ENCODE measurements at regions of chr4 and their contacts with region 1.

Region 1: GRCh38 chr4:142126890-142127497 is 490.6 kb downstream of the IL15 start:
- DNase-seq: peak; percentile 80
- ATAC-seq: peak; percentile 80
- H3K4me3 ChIP-seq: no peak overlapping the region
- H3K27ac ChIP-seq: no peak overlapping the region
- H3K4me1 ChIP-seq: peaks cover 5% of the 10 kb centered on the region
- H3K27me3 ChIP-seq: no peaks in the 10 kb centered on the region
- CTCF ChIP-seq: peak; percentile 85
- POLR2A ChIP-seq: no peak
- RAD21 ChIP-seq: peak; percentile 95

Region 2: DNA sequence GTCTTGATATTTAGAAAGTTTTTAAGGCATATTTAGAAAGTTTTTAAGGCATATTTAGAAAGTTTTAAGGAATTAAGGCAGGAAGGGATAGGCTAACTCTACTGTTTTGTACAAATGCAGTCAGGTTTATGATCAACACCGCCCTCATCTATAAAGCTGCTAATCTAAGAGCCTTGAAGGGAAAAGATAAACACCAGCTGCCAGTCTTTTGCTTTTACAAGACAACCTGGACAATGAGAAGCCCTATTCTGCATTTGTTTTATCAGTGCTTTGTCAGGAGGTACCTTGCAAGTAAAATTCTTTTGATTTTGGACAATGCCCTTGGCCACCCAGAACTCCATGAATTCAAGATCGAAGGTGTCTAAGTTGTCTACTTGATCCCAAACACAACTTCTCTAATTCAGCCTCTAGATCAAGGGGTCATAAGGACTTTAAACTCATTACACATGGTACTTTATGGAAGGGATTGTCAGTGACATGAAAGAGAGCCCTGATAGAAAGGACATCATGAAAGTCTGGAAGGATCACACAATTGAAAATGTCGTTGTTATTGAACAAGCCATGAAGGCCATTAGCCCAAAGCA is 450.8 kb before region 1 on chr4:
- CTCF ChIA-PET with region 1: no interaction called
- POLR2A ChIA-PET with region 1: no interaction called
- dilution Hi-C with region 1: no loop called
- in situ Hi-C with region 1: no loop called
- intact Hi-C with region 1: no loop called
- DNase-seq: no peak
- ATAC-seq: no peak
- H3K4me3 ChIP-seq: no peak overlapping the region
- H3K27ac ChIP-seq: no peak overlapping the region
- H3K4me1 ChIP-seq: peaks cover 2% of the 10 kb centered on the region; the same call in 1 of the 2 replicates
- H3K27me3 ChIP-seq: no peaks in the 10 kb centered on the region
- CTCF ChIP-seq: no peak
- POLR2A ChIP-seq: no peak
- RAD21 ChIP-seq: no peak

Region 3: GRCh38 chr4:142265536-142265935 is 138.5 kb after region 1 on chr4:
- CTCF ChIA-PET with region 1: no interaction called
- POLR2A ChIA-PET with region 1: no interaction called
- dilution Hi-C with region 1: no loop called
- in situ Hi-C with region 1: no loop called
- intact Hi-C with region 1: loop called (anchors 5 kb)
- DNase-seq: peak; percentile 75
- ATAC-seq: peak; percentile 47
- H3K4me3 ChIP-seq: no peak overlapping the region
- H3K27ac ChIP-seq: peak overlapping the region; percentile 93; the same call in 1 of the 2 replicates
- H3K4me1 ChIP-seq: peaks cover 23% of the 10 kb centered on the region
- H3K27me3 ChIP-seq: no peaks in the 10 kb centered on the region
- CTCF ChIP-seq: no peak
- POLR2A ChIP-seq: no peak
- RAD21 ChIP-seq: no peak

Region 4: GRCh38 chr4:142719854-142720541 is 593.0 kb after region 1 on chr4:
- CTCF ChIA-PET with region 1: no interaction called
- POLR2A ChIA-PET with region 1: no interaction called
- dilution Hi-C with region 1: no loop called
- in situ Hi-C with region 1: loop called (anchors 10 kb)
- intact Hi-C with region 1: loop called (anchors 1 kb)
- DNase-seq: peak; percentile 21
- ATAC-seq: peak; percentile 37; the same call in 1 of the 2 replicates
- H3K4me3 ChIP-seq: no peak overlapping the region
- H3K27ac ChIP-seq: no peak overlapping the region
- H3K4me1 ChIP-seq: no peaks in the 10 kb centered on the region
- H3K27me3 ChIP-seq: no peaks in the 10 kb centered on the region
- CTCF ChIP-seq: peak; percentile 57
- POLR2A ChIP-seq: no peak
- RAD21 ChIP-seq: peak; percentile 67

Region 5: DNA sequence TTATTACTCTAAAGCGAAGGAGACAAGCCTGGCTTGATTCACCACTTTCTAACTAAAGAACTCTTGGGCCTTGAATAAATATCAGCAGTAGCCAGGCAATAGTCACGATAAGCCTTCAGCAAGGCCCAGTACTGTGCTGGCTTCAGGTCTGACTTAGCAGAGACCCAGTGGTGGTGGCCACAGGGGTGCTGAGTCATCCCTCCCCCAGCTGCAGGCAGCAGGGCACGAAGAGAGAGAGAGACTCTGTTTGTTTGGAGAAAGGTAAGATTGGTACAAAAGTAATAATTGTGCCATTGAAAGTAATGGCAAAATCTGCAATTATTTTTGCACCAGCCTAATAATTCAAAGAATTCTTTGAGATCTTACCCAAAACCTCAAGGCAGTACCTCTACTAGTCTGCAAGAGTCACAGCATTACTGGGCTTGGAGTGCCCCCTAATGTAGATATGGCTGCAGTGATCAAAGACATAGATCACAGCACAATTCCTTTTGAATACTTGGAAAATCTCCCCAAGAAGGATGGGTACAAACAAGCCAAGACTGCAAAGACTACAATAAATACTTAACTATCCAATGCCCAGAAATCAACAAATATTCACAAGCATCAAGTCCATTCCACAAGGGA is 898.2 kb after region 1 on chr4:
- CTCF ChIA-PET with region 1: no interaction called
- POLR2A ChIA-PET with region 1: no interaction called
- dilution Hi-C with region 1: no loop called
- in situ Hi-C with region 1: no loop called
- intact Hi-C with region 1: loop called (anchors 1 kb)
- DNase-seq: peak; percentile 33
- ATAC-seq: peak; percentile 85
- H3K4me3 ChIP-seq: no peak overlapping the region
- H3K27ac ChIP-seq: no peak overlapping the region
- H3K4me1 ChIP-seq: no peaks in the 10 kb centered on the region
- H3K27me3 ChIP-seq: no peaks in the 10 kb centered on the region
- CTCF ChIP-seq: 0 out of 2 replicates have a peak, but pooled peaks have one; percentile 19
- POLR2A ChIP-seq: no peak
- RAD21 ChIP-seq: peak; percentile 28

Region 6: DNA sequence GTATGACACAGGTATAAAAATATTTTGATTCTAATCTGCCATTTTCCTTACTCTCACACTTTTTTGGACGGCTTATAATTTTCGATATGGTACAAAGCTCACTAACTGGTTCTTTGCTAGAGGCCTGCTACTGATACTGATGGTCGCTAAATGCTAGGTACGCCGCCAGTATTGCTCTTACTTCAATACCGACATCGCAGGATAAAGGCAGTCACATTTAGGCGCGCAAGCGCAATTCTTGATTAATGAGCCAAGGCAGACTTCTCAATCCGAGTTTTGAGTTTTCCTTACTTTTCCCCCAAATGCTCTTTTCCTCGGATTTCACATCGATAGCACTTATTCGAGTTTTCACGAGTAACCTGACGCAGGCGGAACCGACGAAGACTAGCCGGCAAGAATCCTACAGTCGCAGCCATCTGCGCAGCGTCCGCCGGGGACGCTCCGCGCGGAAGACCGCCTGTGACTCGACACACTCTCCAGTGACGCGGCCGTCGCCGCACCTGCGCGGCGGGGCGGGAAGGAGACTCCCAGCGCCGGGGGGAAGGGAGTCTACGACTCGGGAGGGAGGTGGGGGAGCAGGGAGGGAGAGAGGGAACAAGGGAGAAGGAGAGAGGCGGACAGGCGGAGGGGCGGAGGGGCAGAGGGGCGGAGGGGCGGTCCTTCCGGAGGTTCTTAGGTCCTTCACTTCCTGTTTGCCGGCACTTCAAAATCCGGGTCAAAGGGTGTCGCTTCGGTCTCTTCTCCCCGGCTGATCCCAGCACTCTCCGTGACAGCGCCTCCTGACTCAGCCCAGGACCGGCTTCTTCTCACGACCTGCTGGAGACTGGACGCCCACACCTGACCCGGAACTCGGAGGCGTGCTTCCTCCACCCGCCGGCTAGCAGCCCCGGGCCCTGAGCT is 1057.5 kb after region 1 on chr4 and contains the start of gene USP38:
- CTCF ChIA-PET with region 1: no interaction called
- POLR2A ChIA-PET with region 1: no interaction called
- dilution Hi-C with region 1: no loop called
- in situ Hi-C with region 1: no loop called
- intact Hi-C with region 1: loop called (anchors 5 kb)
- DNase-seq: peak; percentile 94
- ATAC-seq: peak; percentile 88
- H3K4me3 ChIP-seq: peak within 1 kb of the TSS; percentile 74
- H3K27ac ChIP-seq: peak within 1 kb of the TSS; percentile 87
- H3K4me1 ChIP-seq: no peaks in the 10 kb centered on the region
- H3K27me3 ChIP-seq: no peaks in the 10 kb centered on the region
- CTCF ChIP-seq: peak; percentile 14; the same call in 1 of the 2 replicates
- POLR2A ChIP-seq: no peak; the same call in 1 of the 2 replicates
- RAD21 ChIP-seq: no peak
- total RNA-seq, gene USP38: 16.4 and 17.0 TPM in 2 replicates